AG04449 (cell line): ENCODE measurements at regions of chr2 and their contacts with region 1.

Region 1: GRCh38 chr2:69816923-69817542 is 12.4 kb upstream of the GMCL1 start:
- DNase-seq: peak; percentile 41
- H3K4me3 ChIP-seq: no peak overlapping the region
- CTCF ChIP-seq: peak; percentile 61

Region 2: GRCh38 chr2:69559442-69560146 is 257.4 kb before region 1 on chr2:
- CTCF ChIA-PET with region 1: interaction called, 10 read pairs
- POLR2A ChIA-PET with region 1: no interaction called
- DNase-seq: no peak
- H3K4me3 ChIP-seq: no peak overlapping the region
- CTCF ChIP-seq: peak; percentile 50

Region 3: GRCh38 chr2:69734035-69734631 is 82.9 kb before region 1 on chr2:
- CTCF ChIA-PET with region 1: interaction called, 82 read pairs
- POLR2A ChIA-PET with region 1: no interaction called
- DNase-seq: no peak
- H3K4me3 ChIP-seq: no peak overlapping the region
- CTCF ChIP-seq: no peak

Region 4: GRCh38 chr2:69762513-69763497 is 54.2 kb before region 1 on chr2:
- CTCF ChIA-PET with region 1: interaction called, 29 read pairs
- POLR2A ChIA-PET with region 1: no interaction called
- DNase-seq: no peak
- H3K4me3 ChIP-seq: no peak overlapping the region
- CTCF ChIP-seq: no peak

Region 5: GRCh38 chr2:69789175-69789721 is 27.8 kb before region 1 on chr2:
- CTCF ChIA-PET with region 1: interaction called, 32 read pairs
- POLR2A ChIA-PET with region 1: no interaction called
- DNase-seq: peak; percentile 92
- H3K4me3 ChIP-seq: no peak overlapping the region
- CTCF ChIP-seq: no peak

Region 6: GRCh38 chr2:69829256-69830046 is 12.4 kb after region 1 on chr2 and contains the start of gene GMCL1:
- CTCF ChIA-PET with region 1: interaction called, 92 read pairs
- POLR2A ChIA-PET with region 1: no interaction called
- DNase-seq: peak; percentile 69
- H3K4me3 ChIP-seq: peak within 1 kb of the TSS; percentile 93
- CTCF ChIP-seq: no peak